ENCODE measurements at regions of chr19 and their contacts with region 1.

Region 1: GRCh38 chr19:16542045-16542909 is at the start of gene CHERP:
- DNase-seq: peak; percentile 94
- H3K4me3 Mint-ChIP-seq: peak within 1 kb of the TSS; percentile 95
- H3K27ac Mint-ChIP-seq: peak within 1 kb of the TSS; percentile 92
- H3K4me1 Mint-ChIP-seq: peaks cover 63% of the 10 kb centered on the region
- H3K27me3 Mint-ChIP-seq: no peaks in the 10 kb centered on the region
- total RNA-seq, gene CHERP: 54.4 to 54.7 TPM

Region 2: DNA sequence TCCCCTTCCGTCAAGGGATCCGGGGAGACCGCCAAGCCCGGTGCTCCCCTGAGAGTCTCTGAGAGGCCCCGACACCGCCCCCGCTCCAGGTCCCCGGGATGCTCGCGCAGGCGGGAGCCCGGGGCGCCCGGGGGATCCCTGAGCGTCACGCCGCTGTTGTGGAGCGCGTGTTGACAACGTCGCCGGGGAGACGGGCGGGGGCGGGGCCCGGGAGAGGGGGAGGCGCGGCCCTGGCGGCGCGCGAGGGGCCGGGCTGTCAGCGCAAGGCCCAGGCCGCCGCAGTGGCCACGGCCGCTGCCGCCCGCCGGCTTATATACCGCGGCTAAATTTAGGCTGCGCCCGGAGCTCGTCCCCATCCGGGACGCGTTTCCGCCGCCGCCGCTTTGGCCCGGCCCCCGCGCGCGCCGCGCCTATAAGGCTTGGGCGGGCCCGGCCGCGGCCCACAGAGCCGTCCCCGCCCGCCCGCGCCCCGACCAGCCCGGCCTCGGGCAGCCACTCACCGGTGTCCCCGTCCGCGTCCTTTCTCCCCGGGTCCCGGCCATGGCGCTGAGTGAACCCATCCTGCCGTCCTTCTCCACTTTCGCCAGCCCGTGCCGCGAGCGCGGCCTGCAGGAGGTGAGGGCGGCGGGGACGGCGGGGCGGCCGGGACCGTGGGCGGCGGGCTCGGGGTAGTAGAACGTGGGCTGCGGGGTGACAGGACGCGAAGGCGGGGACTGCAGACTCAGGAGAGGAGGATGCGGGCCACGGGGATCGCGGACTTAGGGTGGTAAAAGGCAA is 217.7 kb before region 1 on chr19 and contains the start of gene KLF2:
- CTCF ChIA-PET with region 1: no interaction called
- intact Hi-C with region 1: loop called (anchors 1 kb)
- DNase-seq: peak; percentile 83
- H3K4me3 Mint-ChIP-seq: peak within 1 kb of the TSS; percentile 58
- H3K27ac Mint-ChIP-seq: no peak within 1 kb of the TSS
- H3K4me1 Mint-ChIP-seq: peaks cover 45% of the 10 kb centered on the region
- H3K27me3 Mint-ChIP-seq: peaks cover 14% of the 10 kb centered on the region
- total RNA-seq, gene KLF2: 0.22 to 0.69 TPM

Region 3: DNA sequence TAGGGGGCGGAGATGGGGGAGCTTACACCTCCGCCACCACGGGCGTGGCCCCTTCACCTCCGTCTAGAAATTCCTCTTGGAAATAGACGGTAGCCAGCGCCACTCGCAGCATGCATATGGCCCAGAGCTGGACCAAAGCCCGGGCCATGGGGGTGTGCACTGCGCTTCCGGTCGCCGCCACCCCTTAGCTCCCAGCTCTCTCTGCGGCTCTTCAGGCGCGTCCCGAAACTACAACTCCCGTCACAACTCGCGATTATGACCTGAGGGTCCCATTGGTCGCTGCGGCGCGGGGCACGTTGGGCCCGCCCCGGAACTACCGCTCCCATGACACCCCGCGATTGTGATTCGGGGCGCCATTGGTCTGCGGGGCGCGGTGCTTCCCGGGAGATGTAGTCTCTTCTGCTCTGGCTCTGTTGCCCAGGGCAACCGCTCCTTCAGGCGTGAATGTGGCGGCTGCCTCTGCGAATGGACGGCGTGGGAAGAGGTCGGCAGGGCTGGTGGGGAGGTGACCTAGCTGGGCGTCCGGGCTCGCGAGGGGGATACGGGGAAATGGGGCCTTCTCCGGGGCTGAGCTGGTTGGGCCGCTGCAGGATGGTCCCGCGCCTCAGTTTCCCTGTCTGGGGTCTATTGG is 46.2 kb before region 1 on chr19 and contains the starts of genes C19orf44 and CALR3:
- CTCF ChIA-PET with region 1: no interaction called
- intact Hi-C with region 1: loop called (anchors 1 kb)
- DNase-seq: peak; percentile 98
- H3K4me3 Mint-ChIP-seq: peak within 1 kb of the TSS; percentile 95
- H3K27ac Mint-ChIP-seq: peak within 1 kb of the TSS; percentile 64
- H3K4me1 Mint-ChIP-seq: peaks cover 15% of the 10 kb centered on the region
- H3K27me3 Mint-ChIP-seq: no peaks in the 10 kb centered on the region
- total RNA-seq, gene C19orf44: 2.1 to 2.6 TPM
- total RNA-seq, gene CALR3: not detected

Region 4: GRCh38 chr19:16566161-16566560 is 23.9 kb after region 1 on chr19:
- CTCF ChIA-PET with region 1: no interaction called
- intact Hi-C with region 1: loop called (anchors 2 kb)
- DNase-seq: peak; percentile 85
- H3K4me3 Mint-ChIP-seq: peak overlapping the region; percentile 7
- H3K27ac Mint-ChIP-seq: peak overlapping the region; percentile 94
- H3K4me1 Mint-ChIP-seq: peaks cover 32% of the 10 kb centered on the region
- H3K27me3 Mint-ChIP-seq: no peaks in the 10 kb centered on the region

Region 5: GRCh38 chr19:16584248-16585141 is 42.2 kb after region 1 on chr19:
- CTCF ChIA-PET with region 1: no interaction called
- intact Hi-C with region 1: loop called (anchors 1 kb)
- DNase-seq: peak; percentile 96
- H3K4me3 Mint-ChIP-seq: peak overlapping the region; percentile 79
- H3K27ac Mint-ChIP-seq: peak overlapping the region; percentile 82
- H3K4me1 Mint-ChIP-seq: peaks cover 79% of the 10 kb centered on the region
- H3K27me3 Mint-ChIP-seq: no peaks in the 10 kb centered on the region

Region 6: GRCh38 chr19:16659831-16660708 is 117.8 kb after region 1 on chr19 and contains the start of gene SMIM7:
- CTCF ChIA-PET with region 1: no interaction called
- intact Hi-C with region 1: loop called (anchors 1 kb)
- DNase-seq: peak; percentile 98
- H3K4me3 Mint-ChIP-seq: peak within 1 kb of the TSS; percentile 92
- H3K27ac Mint-ChIP-seq: peak within 1 kb of the TSS; percentile 92
- H3K4me1 Mint-ChIP-seq: peaks cover 39% of the 10 kb centered on the region
- H3K27me3 Mint-ChIP-seq: peaks cover 6% of the 10 kb centered on the region
- total RNA-seq, gene SMIM7: 51.0 to 59.2 TPM